Activated CD4-positive, alpha-beta T cell treated with anti-CD3 and anti-CD28 coated beads for 36 hours (primary cell): ENCODE measurements at regions of chr20 and their contacts with region 1.

Region 1: DNA sequence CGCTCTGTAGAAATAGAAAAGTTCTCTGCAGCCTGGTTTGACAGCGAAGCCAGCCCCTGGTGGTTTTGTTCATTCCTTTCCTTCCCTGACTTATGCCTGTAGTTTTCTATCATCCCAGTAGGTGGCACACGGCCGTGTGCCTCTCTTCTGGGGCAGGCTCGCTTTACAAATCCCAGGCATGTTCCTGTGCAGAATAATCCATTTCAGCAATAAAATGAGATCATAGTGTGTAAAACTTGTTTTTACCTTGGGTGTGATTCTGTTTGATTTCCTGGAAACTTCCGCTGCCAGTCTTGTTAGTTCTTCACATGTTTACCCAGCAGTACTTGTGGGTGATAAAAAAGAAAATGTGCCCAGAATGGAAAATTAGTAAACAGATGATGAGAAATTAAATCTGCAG is 7.4 kb upstream of the INSM1 start:
- DNase-seq: peak; percentile 69
- ATAC-seq: peak; percentile 71
- H3K4me3 Mint-ChIP-seq: no peak overlapping the region
- H3K27ac Mint-ChIP-seq: no peak overlapping the region
- H3K4me1 Mint-ChIP-seq: peaks cover 27% of the 10 kb centered on the region
- H3K27me3 Mint-ChIP-seq: peaks cover 49% of the 10 kb centered on the region

Region 2: GRCh38 chr20:20083807-20084206 is 276.7 kb before region 1 on chr20:
- CTCF ChIA-PET with region 1: no interaction called
- POLR2A ChIA-PET with region 1: no interaction called
- intact Hi-C with region 1: loop called in 1 of 2 experiments (anchors 5 kb)
- DNase-seq: no peak
- ATAC-seq: peak; percentile 44
- H3K4me3 Mint-ChIP-seq: no peak overlapping the region
- H3K27ac Mint-ChIP-seq: no peak overlapping the region
- H3K4me1 Mint-ChIP-seq: peaks cover 2% of the 10 kb centered on the region
- H3K27me3 Mint-ChIP-seq: peaks cover 10% of the 10 kb centered on the region

Region 3: GRCh38 chr20:20452254-20452676 is 91.8 kb after region 1 on chr20:
- CTCF ChIA-PET with region 1: interaction called, 3 read pairs
- POLR2A ChIA-PET with region 1: no interaction called
- intact Hi-C with region 1: loop called in 1 of 2 experiments (anchors 2 kb)
- DNase-seq: peak; percentile 84
- ATAC-seq: peak; percentile 97
- H3K4me3 Mint-ChIP-seq: peak overlapping the region; percentile 78
- H3K27ac Mint-ChIP-seq: peak overlapping the region; percentile 71
- H3K4me1 Mint-ChIP-seq: peaks cover 46% of the 10 kb centered on the region
- H3K27me3 Mint-ChIP-seq: no peaks in the 10 kb centered on the region

Region 4: GRCh38 chr20:20568604-20569205 is 208.2 kb after region 1 on chr20:
- CTCF ChIA-PET with region 1: interaction called, 4 read pairs
- POLR2A ChIA-PET with region 1: no interaction called
- intact Hi-C with region 1: loop called (anchors 1 kb)
- DNase-seq: peak; percentile 63
- ATAC-seq: no peak
- H3K4me3 Mint-ChIP-seq: no peak overlapping the region
- H3K27ac Mint-ChIP-seq: no peak overlapping the region
- H3K4me1 Mint-ChIP-seq: no peaks in the 10 kb centered on the region
- H3K27me3 Mint-ChIP-seq: no peaks in the 10 kb centered on the region

Region 5: DNA sequence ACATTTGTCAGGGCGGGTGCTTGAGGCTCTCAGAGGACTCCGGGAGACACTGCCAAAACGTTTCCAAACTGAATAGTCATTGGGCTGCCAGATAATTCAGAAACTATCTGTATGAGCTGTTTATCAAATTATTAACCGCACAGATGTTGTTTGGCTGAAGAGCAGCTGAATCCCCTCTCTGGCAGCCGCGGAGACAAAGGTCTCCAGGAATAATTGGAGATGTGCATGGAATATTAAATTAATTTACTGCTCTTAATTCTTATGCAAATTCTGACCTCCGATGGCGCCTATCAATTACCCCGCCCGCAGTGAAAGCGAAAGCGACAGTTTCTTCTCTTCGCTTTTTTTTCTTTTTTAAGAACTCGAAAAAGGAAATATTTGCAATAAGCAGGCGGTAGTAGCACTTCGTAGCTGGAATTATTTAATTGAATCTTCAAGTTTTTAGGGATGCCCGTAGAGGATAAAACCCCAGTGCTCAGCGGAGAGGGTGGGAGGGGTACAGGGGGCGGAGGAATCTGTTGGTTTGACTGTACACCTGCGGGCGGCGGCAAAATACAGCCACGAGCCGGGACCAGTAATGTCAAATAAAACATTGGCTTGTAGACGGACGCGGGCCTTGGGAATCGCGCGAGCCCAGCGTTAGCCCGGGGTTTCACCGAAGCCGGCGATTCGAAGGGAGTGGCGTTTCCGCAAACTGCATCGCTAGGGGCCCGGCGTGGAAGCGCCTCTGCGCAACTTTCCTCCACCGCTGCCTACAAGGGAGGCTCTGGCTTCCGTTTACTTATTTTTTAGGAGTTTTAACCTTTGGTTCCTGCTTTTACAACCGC is 739.5 kb after region 1 on chr20:
- CTCF ChIA-PET with region 1: no interaction called
- POLR2A ChIA-PET with region 1: no interaction called
- intact Hi-C with region 1: loop called (anchors 5 to 10 kb)
- DNase-seq: peak; percentile 71
- ATAC-seq: peak; percentile 53
- H3K4me3 Mint-ChIP-seq: peak overlapping the region; percentile 78
- H3K27ac Mint-ChIP-seq: peak overlapping the region; percentile 92
- H3K4me1 Mint-ChIP-seq: peaks cover 34% of the 10 kb centered on the region
- H3K27me3 Mint-ChIP-seq: peaks cover 68% of the 10 kb centered on the region

Region 6: GRCh38 chr20:21395666-21396598 is 1035.5 kb after region 1 on chr20:
- CTCF ChIA-PET with region 1: no interaction called
- POLR2A ChIA-PET with region 1: no interaction called
- intact Hi-C with region 1: loop called in 1 of 2 experiments (anchors 5 kb)
- DNase-seq: peak; percentile 67
- ATAC-seq: peak; percentile 76
- H3K4me3 Mint-ChIP-seq: peak overlapping the region; percentile 40
- H3K27ac Mint-ChIP-seq: no peak overlapping the region
- H3K4me1 Mint-ChIP-seq: peaks cover 24% of the 10 kb centered on the region
- H3K27me3 Mint-ChIP-seq: peaks cover 62% of the 10 kb centered on the region